ENCODE measurements at regions of chr1 and their contacts with region 1.

Region 1: GRCh38 chr1:202553560-202554038 is 156.7 kb downstream of the SYT2 start:
- DNase-seq: no peak
- H3K4me3 ChIP-seq: no peak overlapping the region
- H3K27ac ChIP-seq: no peak overlapping the region
- H3K27me3 ChIP-seq: no peaks in the 10 kb centered on the region
- CTCF ChIP-seq: no peak

Region 2: GRCh38 chr1:202571347-202572339 is 18.0 kb after region 1 on chr1:
- CTCF ChIA-PET with region 1: interaction called, 10 read pairs
- POLR2A ChIA-PET with region 1: no interaction called
- DNase-seq: no peak
- H3K4me3 ChIP-seq: no peak overlapping the region
- H3K27ac ChIP-seq: no peak overlapping the region
- H3K27me3 ChIP-seq: no peaks in the 10 kb centered on the region
- CTCF ChIP-seq: peak; percentile 87